Activated B cell treated with CpG ODN at 0.5 μM for 24 hours (primary cell): ENCODE measurements at regions of chr3 and their contacts with region 1.

Region 1: DNA sequence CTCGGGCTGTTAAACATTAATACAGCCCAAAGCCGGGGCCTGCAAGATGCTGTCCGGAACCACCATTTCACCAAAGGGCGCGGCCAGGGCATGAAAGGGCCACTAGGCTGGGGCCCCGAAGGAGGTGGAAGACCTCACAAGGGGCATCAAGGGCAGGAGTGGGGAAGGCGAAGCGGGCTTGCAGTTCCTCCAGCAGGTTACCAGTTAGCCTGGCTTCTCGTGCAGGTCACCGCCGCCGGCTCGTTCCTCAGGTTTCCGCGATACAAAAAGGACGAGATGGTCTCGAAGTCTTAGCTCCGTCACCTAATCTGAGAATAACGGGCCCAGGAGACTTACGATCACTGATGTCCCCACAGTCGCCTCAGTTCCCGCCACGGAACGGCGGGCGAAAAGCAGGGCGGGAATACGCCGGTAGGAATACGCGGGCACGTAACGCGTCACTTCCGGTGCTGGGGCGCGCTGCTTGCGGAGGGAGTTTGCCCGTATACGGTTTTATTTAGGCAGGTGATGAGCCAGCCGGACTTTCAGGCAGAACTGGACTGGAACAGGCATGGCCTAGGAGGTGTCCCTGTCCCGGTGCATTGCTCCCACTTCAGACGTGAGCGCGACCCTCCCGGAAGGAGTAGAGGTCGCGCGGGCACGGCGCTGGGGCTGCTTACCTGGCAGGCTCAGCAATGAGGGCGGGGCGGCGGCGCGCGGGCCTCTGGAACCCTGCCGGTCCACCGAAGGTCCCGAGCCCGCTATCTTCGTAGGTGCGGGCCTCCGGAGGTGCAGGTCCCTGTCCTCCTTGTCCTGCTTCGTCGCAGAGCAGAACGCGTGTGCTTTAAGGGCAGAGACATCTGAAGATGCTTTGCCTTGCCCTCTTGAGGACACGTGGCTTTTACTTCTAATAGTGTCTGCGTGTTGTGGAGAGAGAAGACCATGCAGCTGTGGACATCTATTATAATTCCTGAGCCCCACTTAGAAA is at the start of gene RFC4:
- DNase-seq: peak; percentile 78
- ATAC-seq: peak; percentile 86
- H3K4me3 Mint-ChIP-seq: peak within 1 kb of the TSS; percentile 96
- H3K27ac Mint-ChIP-seq: peak within 1 kb of the TSS; percentile 91
- H3K4me1 Mint-ChIP-seq: peaks cover 17% of the 10 kb centered on the region
- H3K27me3 Mint-ChIP-seq: no peaks in the 10 kb centered on the region
- CTCF ChIP-seq: no peak
- total RNA-seq, gene RFC4: 28.8 and 29.9 TPM in 2 replicates

Region 2: DNA sequence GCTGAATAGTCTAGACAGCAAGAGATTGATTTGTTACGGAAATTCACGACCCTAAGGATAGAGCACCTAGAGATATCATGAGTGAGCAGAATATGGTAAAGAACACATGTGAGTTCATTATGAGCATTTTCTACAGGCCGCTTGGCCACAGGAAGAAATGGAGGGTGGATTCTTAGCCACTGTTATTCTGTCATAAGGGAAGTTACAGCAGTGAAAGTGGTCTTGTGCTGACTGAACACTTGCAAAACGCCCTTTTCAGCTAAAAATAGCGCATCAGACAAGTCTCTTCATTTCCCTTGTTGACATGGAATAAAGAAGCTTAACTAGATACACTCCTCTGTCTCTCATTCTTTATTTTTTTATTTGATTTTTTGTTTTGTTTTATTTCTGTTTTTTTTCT is 464.2 kb before region 1 on chr3:
- CTCF ChIA-PET with region 1: no interaction called
- POLR2A ChIA-PET with region 1: no interaction called
- intact Hi-C with region 1: loop called (anchors 10 kb)
- DNase-seq: no peak
- ATAC-seq: peak; percentile 66
- H3K4me3 Mint-ChIP-seq: no peak overlapping the region
- H3K27ac Mint-ChIP-seq: peak overlapping the region; percentile 72
- H3K4me1 Mint-ChIP-seq: peaks cover 54% of the 10 kb centered on the region
- H3K27me3 Mint-ChIP-seq: no peaks in the 10 kb centered on the region
- CTCF ChIP-seq: no peak

Region 3: DNA sequence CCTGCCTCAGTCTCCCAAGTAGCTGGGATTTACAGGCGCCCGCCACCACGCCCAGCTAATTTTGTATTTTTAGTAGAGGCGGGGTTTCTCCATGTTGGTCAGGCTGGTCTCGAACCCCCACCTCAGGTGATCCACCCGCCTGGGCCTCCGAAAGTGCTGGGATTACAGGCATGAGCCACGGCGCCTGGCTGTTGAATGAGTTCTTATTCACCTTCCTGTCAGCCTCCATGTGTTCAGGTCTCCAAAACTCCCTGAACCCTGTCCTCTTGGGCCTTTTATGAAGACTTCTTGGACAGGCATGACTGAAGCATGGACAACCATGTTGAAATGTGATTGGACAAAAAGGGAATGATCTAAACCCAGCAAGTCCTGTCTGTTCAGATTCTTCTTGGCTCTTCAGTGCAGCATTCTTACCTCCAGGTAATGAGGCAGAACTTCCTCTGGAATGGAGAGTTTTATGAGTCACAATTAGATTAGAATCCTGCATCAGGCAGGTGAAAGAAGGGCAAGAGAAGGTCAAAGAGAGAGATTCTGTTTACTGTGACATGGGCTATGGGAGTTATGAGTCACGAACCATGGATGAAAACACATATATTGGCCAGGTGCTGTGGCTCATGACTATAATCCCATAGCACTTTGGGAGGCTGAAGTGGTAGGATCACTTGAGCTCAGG is 46.1 kb before region 1 on chr3:
- CTCF ChIA-PET with region 1: no interaction called
- POLR2A ChIA-PET with region 1: no interaction called
- intact Hi-C with region 1: no loop called
- DNase-seq: no peak
- ATAC-seq: no peak
- H3K4me3 Mint-ChIP-seq: no peak overlapping the region
- H3K27ac Mint-ChIP-seq: no peak overlapping the region
- H3K4me1 Mint-ChIP-seq: no peaks in the 10 kb centered on the region
- H3K27me3 Mint-ChIP-seq: no peaks in the 10 kb centered on the region
- CTCF ChIP-seq: no peak

Region 4: GRCh38 chr3:186772701-186773424 is 33.5 kb before region 1 on chr3:
- CTCF ChIA-PET with region 1: no interaction called
- POLR2A ChIA-PET with region 1: interaction called, 10 read pairs
- intact Hi-C with region 1: loop called (anchors 1 kb)
- DNase-seq: peak; percentile 67
- ATAC-seq: peak; percentile 94
- H3K4me3 Mint-ChIP-seq: peak overlapping the region; percentile 96
- H3K27ac Mint-ChIP-seq: peak overlapping the region; percentile 96
- H3K4me1 Mint-ChIP-seq: peaks cover 23% of the 10 kb centered on the region
- H3K27me3 Mint-ChIP-seq: no peaks in the 10 kb centered on the region
- CTCF ChIP-seq: no peak

Region 5: GRCh38 chr3:186826976-186827731 is 20.8 kb after region 1 on chr3:
- CTCF ChIA-PET with region 1: no interaction called
- POLR2A ChIA-PET with region 1: interaction called, 4 read pairs
- intact Hi-C with region 1: loop called (anchors 1 kb)
- DNase-seq: peak; percentile 85
- ATAC-seq: peak; percentile 94
- H3K4me3 Mint-ChIP-seq: peak overlapping the region; percentile 71
- H3K27ac Mint-ChIP-seq: no peak overlapping the region
- H3K4me1 Mint-ChIP-seq: peaks cover 22% of the 10 kb centered on the region
- H3K27me3 Mint-ChIP-seq: peaks cover 47% of the 10 kb centered on the region
- CTCF ChIP-seq: no peak